ENCODE measurements at regions of chr19 and their contacts with region 1.

Region 1: GRCh38 chr19:51660975-51661600 is 14.5 kb upstream of the SIGLEC14 start:
- ATAC-seq: peak; percentile 66 to 87 (median 80)
- H3K4me3 ChIP-seq: no peak overlapping the region
- H3K27ac ChIP-seq: no peak overlapping the region
- H3K4me1 ChIP-seq: no peaks in the 10 kb centered on the region

Region 2: DNA sequence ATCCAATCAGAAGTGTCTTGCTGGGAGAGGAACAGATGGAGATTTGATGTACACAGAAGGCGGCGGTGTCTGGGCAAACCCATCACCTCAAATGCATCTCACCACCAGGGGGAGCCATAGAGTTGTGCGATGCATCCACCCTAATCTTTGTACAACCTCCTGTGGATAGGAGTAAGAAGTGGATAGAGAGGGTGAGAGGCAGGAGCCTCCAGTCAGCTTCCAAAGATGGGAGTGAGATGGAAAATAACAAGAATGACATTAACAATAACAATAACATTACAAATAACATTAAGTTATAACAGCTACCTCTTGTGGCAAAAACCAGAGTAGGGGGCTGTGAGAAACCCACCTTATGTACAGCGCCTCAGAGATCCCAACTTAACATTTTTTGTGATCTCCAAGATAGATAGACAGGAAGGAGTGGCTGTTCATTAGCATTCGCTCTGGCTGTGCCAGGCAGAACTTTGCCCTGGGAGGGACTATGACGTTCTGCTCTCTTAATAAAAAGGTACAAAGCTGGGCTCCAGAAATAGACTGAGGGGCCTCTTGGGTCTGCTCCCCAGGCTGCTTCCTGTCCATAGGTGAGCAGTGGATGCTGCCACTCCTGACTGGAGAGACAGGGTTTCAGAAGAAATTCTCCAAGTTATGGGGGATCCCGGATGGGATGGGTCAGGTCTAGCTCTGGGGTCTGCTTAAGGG is 187.9 kb before region 1 on chr19:
- in situ Hi-C with region 1: loop called in 3 of 9 experiments (anchors 25 kb)
- ATAC-seq: peak; percentile 44 to 98 (median 63)
- H3K4me3 ChIP-seq: no peak overlapping the region
- H3K27ac ChIP-seq: no peak overlapping the region
- H3K4me1 ChIP-seq: no peaks in the 10 kb centered on the region

Region 3: DNA sequence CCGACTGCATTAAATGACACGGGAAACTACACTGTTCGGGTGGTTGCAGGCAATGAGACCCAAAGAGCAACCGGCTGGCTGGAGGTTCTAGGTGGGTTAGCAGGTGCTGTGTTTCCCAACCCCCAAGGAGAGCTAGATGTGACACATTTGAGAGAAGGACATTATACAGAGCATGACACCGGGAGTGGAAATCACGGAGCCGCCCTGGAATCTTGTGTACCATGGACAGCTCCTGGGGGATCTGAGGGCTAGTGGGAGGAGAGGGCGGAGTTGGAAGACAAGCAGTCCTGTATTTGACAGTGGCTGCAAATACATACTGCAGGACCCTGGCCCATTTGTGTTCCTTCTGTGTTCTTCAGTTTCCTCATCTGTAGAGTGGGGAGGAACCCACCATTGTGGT is 180.5 kb before region 1 on chr19:
- in situ Hi-C with region 1: loop called in 1 of 9 experiments (anchors 25 kb)
- ATAC-seq: peak in 3 of 8 experiments; percentile 36 to 76 (median 39)
- H3K4me3 ChIP-seq: no peak overlapping the region
- H3K27ac ChIP-seq: no peak overlapping the region
- H3K4me1 ChIP-seq: no peaks in the 10 kb centered on the region

Measured in motor neuron (in vitro differentiated cells).